ENCODE measurements at regions of chr11 and their contacts with region 1.

Region 1: DNA sequence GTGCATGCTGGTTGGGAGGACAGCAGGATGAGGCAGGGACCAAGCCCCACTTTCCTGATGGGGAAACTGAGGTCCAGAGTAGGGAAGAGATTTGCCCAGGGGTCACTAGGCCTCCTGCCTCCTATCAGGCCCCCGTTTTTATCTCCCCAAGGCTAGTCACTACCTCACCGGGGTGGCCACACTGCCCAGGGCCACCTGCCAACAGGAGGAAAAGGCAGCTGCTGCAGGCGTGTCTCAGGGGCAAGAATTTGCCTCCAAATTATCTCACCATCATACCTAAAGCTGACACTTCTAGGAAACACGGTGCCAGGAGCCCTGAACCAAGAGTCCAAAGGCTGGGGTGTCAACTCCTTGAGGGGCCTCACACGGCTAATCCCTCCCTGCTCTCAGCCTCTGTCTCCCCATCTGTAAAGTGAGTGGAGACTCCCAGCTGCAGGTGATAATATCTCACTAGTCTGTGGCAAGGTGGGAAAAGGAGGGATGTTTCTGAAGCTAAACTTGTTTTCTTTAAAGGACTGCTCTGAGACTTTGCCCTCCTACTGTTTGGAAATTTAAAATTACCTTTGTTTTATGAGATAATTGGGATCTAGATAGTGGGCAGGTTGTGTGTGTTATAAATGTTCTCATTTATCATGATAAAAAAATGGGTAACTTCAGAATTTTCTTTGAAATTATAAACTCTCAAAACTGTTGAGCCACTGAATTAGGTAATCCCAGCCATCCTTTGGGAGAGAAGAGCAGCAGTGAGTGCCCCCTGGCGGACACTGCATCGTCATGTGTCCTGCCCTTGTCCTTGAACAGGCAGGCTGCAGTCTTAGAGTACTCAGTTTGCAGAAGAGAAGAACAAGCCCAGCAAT is 60.0 kb downstream of the MYO7A start:
- DNase-seq: peak in 1 of 2 experiments; percentile 83
- H3K4me3 ChIP-seq: no peak overlapping the region
- H3K27ac ChIP-seq: no peak overlapping the region
- H3K4me1 ChIP-seq: peaks cover 0 to 7% (median 6%) of the 10 kb centered on the region in 4 experiments; a peak in 6 of 7 replicates
- H3K27me3 ChIP-seq: no peaks in the 10 kb centered on the region
- CTCF ChIP-seq: peak; percentile 90 to 94 (median 90)
- EP300 ChIP-seq: no peak
- POLR2A ChIP-seq: no peak
- RAD21 ChIP-seq: peak; percentile 86 to 92

Region 2: GRCh38 chr11:77091146-77091940 is 96.7 kb before region 1 on chr11:
- CTCF ChIA-PET with region 1: interaction called, 11 read pairs
- POLR2A ChIA-PET with region 1: no interaction called
- DNase-seq: peak; percentile 73 to 97
- H3K4me3 ChIP-seq: no peak overlapping the region
- H3K27ac ChIP-seq: no peak overlapping the region
- H3K4me1 ChIP-seq: peaks cover 0 to 8% (median 2%) of the 10 kb centered on the region in 4 experiments; a peak in 3 of 7 replicates
- H3K27me3 ChIP-seq: no peaks in the 10 kb centered on the region
- CTCF ChIP-seq: peak; percentile 96 to 100 (median 100)
- EP300 ChIP-seq: no peak
- POLR2A ChIP-seq: no peak
- RAD21 ChIP-seq: peak; percentile 92 to 93

Region 3: DNA sequence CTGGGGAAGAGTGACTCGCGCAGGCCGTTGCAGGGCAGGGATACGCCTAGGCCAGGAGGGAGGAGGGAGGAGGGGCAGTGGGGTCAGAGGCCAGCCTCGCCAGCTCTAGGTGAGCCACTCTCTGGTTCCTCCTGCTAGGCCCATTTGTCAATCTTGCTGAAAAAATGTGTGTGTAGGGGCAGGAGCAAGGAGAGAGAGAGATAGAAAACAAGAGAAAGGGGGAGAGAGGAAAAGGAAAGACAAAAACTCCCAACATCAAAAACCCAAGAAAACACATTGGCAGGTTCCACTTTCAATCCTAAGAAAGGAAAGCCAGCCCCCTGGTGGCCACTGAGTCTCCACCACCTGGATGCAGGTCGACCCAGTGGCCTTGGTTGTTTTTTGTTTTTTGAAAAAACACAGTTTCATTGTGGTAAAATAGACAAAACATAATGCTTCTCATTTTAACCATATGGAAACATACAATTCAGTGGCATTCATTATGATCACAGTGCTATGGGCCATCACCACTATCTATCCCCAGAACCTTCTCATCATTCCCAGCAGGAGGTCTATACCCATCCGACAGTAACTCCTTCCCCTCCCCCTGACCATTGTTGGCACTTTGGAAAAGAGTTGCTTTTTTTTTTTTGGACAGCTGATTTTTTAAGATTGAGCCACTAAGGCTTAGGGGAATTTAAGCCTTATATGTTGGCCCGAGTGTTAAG is 74.5 kb before region 1 on chr11:
- CTCF ChIA-PET with region 1: interaction called, 51 read pairs
- POLR2A ChIA-PET with region 1: no interaction called
- DNase-seq: peak in 1 of 2 experiments; percentile 75
- H3K4me3 ChIP-seq: no peak overlapping the region
- H3K27ac ChIP-seq: no peak overlapping the region
- H3K4me1 ChIP-seq: peaks cover 0 to 3% (median 1%) of the 10 kb centered on the region in 4 experiments; a peak in 3 of 7 replicates
- H3K27me3 ChIP-seq: no peaks in the 10 kb centered on the region
- CTCF ChIP-seq: peak; percentile 44 to 66 (median 59)
- EP300 ChIP-seq: no peak
- POLR2A ChIP-seq: no peak
- RAD21 ChIP-seq: peak; percentile 47 to 50

Region 4: DNA sequence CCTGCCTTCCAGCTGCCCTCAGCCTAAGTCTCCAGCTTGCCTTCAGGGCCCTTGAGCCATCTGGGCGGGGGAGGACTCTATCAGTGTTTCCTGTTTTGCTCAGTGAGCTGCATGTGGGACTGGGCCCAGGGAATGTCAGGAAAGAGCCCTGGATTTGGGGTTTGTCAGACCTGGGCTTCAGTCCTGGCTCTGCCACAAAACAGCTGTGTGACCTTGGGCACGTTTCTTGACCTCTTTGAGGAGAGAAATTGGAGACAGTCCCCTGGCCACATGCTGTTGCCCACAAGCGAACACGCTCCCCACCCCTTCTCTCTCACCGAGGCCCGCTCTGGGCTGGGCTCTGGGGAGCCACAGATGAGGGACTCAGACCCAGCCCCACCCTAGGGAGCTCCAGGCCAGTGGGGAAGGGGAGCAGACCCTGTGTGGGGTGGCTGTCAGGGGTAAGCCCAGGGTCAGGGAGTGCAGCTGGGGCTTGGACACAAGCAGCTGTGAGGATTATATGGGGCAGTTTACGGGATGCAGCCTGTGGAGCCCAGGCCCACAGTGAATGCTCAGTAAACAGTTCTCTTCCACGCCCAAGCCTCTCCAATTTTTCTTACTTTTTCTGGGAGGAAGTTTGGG is 47.7 kb before region 1 on chr11:
- CTCF ChIA-PET with region 1: interaction called, 248 read pairs
- POLR2A ChIA-PET with region 1: interaction called, 3 read pairs
- DNase-seq: peak; percentile 9 to 54
- H3K4me3 ChIP-seq: no peak overlapping the region
- H3K27ac ChIP-seq: no peak overlapping the region
- H3K4me1 ChIP-seq: peaks cover 0 to 9% (median 3%) of the 10 kb centered on the region in 4 experiments; a peak in 4 of 7 replicates
- H3K27me3 ChIP-seq: no peaks in the 10 kb centered on the region
- CTCF ChIP-seq: no peak
- EP300 ChIP-seq: no peak
- POLR2A ChIP-seq: no peak
- RAD21 ChIP-seq: no peak

Region 5: DNA sequence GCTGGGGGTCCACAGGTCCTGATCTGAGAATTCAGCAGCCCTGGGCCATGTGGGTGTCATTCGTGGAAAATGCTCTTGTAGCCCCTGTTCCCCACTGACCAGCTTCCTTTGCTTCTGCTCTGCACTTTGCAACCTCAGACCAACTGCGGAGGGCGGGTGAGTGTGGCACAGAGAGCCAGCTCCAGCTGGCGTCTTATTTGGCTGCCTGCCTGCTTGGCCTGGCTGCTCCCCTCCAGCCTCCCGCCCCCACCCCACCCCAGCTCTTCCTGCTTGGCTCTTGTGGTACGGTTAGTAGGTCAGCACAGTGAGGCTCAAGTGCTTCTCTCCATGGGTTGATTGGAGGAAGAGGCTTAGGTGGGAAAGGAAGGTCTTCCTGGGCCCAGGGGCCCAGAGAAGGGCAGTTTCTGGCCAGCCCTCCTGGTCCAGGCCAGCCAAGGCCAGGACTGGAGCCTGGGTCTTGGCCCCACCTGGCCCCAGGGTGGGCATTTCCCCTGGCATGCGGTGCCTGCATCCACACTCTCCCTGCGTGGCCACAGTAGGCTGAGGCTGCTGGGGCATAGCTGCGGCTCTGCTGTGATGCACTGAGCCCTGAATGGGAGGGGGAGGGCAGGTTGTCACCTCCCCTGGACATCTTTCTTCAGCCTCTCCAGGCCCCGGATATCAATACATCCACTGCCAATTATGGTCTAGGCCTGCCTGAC is 33.5 kb before region 1 on chr11:
- CTCF ChIA-PET with region 1: interaction called, 37 read pairs
- POLR2A ChIA-PET with region 1: no interaction called
- DNase-seq: no peak
- H3K4me3 ChIP-seq: no peak overlapping the region
- H3K27ac ChIP-seq: no peak overlapping the region
- H3K4me1 ChIP-seq: peaks cover 0 to 4% (median 0%) of the 10 kb centered on the region in 4 experiments; a peak in 1 of 7 replicates
- H3K27me3 ChIP-seq: no peaks in the 10 kb centered on the region
- CTCF ChIP-seq: no peak
- EP300 ChIP-seq: no peak
- POLR2A ChIP-seq: no peak
- RAD21 ChIP-seq: no peak

Region 6: GRCh38 chr11:77198440-77198849 is 10.4 kb after region 1 on chr11:
- CTCF ChIA-PET with region 1: interaction called, 45 read pairs
- POLR2A ChIA-PET with region 1: no interaction called
- DNase-seq: peak; percentile 44 to 85
- H3K4me3 ChIP-seq: no peak overlapping the region
- H3K27ac ChIP-seq: no peak overlapping the region
- H3K4me1 ChIP-seq: no peaks in the 10 kb centered on the region; a peak in 1 of 7 replicates
- H3K27me3 ChIP-seq: no peaks in the 10 kb centered on the region
- CTCF ChIP-seq: peak in 2 of 3 experiments; percentile 66 to 96; a peak in 3 of 4 replicates
- EP300 ChIP-seq: no peak
- POLR2A ChIP-seq: no peak
- RAD21 ChIP-seq: peak; percentile 58 to 68

Region 7: GRCh38 chr11:77299528-77299993 is 111.6 kb after region 1 on chr11:
- CTCF ChIA-PET with region 1: interaction called, 10 read pairs
- POLR2A ChIA-PET with region 1: no interaction called
- DNase-seq: no peak
- H3K4me3 ChIP-seq: no peak overlapping the region
- H3K27ac ChIP-seq: no peak overlapping the region
- H3K4me1 ChIP-seq: no peaks in the 10 kb centered on the region
- H3K27me3 ChIP-seq: no peaks in the 10 kb centered on the region
- CTCF ChIP-seq: no peak
- EP300 ChIP-seq: no peak
- POLR2A ChIP-seq: no peak
- RAD21 ChIP-seq: no peak

Region 8: DNA sequence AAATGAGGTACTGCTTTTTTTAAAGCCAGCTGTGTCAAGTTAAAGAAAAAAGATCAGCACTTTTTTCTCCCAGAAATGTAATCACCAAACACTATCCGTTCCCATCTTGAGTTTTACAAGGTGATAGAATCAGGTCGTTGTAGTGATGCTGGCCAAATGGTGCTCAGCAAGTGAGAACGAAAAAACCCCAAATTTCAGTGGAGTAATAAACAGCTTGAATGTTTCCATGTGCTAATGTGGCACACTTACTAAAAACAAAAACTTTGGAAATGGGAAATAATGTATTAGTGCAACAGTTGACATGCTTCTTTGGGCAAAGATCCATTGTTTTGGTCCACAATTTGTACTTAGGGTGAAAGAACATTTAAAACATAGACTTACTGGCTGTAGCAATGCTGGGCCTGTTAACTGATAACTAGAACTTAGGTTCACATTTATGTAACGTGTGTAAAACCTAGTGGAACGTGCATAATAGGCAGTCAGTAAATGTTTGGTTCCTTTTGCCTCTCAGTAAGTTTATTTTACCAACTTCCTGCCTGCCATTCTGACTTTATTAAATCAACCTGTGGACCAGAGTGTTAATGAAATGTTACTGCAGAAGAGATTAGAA is 128.8 kb after region 1 on chr11:
- CTCF ChIA-PET with region 1: no interaction called
- POLR2A ChIA-PET with region 1: no interaction called
- DNase-seq: no peak
- H3K4me3 ChIP-seq: no peak overlapping the region
- H3K27ac ChIP-seq: no peak overlapping the region
- H3K4me1 ChIP-seq: no peaks in the 10 kb centered on the region
- H3K27me3 ChIP-seq: peaks cover 0 to 1% (median 0%) of the 10 kb centered on the region in 4 experiments; a peak in 2 of 7 replicates
- CTCF ChIP-seq: no peak
- EP300 ChIP-seq: no peak
- POLR2A ChIP-seq: no peak
- RAD21 ChIP-seq: no peak